Naive thymus-derived CD4-positive, alpha-beta T cell (primary cell): ENCODE measurements at regions of chr19 and their contacts with region 1.

Region 1: DNA sequence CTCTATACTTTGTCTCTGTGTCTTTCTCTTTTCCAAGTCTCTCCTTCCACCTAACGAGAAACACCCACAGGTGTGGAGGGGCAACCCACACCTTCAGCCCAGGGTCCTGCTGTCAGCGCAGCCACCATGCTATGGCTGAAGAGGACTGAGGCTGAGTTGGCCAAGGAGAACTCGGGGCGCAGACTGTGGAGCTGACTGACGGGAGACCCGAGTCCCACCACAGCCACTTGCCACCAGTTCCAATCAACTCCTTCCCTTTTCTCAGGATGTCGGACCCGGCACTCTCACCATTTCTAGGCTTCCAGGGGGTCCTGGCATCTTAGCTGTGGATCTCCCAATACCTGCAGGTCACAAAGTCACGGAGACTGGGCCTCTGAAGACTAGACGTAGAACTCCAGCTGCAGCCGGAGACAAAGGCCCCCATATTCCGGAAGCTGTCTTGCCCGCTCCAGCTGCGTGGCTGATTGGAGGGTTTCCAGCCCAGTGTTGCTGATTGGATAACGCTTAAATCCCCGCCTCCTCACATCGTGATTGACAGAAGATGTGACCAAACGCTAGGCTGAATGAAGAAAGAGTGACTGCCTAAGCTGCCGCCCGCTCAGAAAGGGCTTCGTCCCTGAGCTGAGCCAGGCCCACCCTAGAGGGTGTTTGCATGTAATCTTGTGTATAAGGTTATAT is 63.6 kb downstream of the ZNF429 start:
- DNase-seq: peak; percentile 54 to 94 (median 89)
- ATAC-seq: peak; percentile 99
- H3K4me3 ChIP-seq: peak overlapping the region; percentile 64
- H3K4me3 Mint-ChIP-seq: peak overlapping the region; percentile 85 to 99 (median 94)
- H3K27ac ChIP-seq: peak overlapping the region; percentile 71
- H3K27ac Mint-ChIP-seq: peak overlapping the region; percentile 94 to 99 (median 96)
- H3K4me1 ChIP-seq: no peaks in the 10 kb centered on the region
- H3K4me1 Mint-ChIP-seq: peaks cover 0 to 44% (median 24%) of the 10 kb centered on the region in 7 donors
- H3K27me3 ChIP-seq: no peaks in the 10 kb centered on the region
- H3K27me3 Mint-ChIP-seq: no peaks in the 10 kb centered on the region

Region 2: GRCh38 chr19:21580101-21580500 is 11.1 kb after region 1 on chr19:
- CTCF ChIA-PET with region 1: interaction called, 9 read pairs
- POLR2A ChIA-PET with region 1: interaction called, 144 read pairs
- intact Hi-C with region 1: loop called in 1 of 2 experiments (anchors 1 kb)
- DNase-seq: peak in 5 of 9 donors; percentile 42 to 54 (median 48)
- ATAC-seq: peak; percentile 57
- H3K4me3 ChIP-seq: no peak overlapping the region
- H3K4me3 Mint-ChIP-seq: peak overlapping the region in 7 of 10 donors; percentile 37 to 75 (median 64)
- H3K27ac ChIP-seq: peak overlapping the region; percentile 51
- H3K27ac Mint-ChIP-seq: peak overlapping the region in 7 of 9 donors; percentile 72 to 89 (median 85)
- H3K4me1 ChIP-seq: peaks cover 0 to 20% of the 10 kb centered on the region in 2 donors
- H3K4me1 Mint-ChIP-seq: peaks cover 0 to 60% (median 31%) of the 10 kb centered on the region in 7 donors
- H3K27me3 ChIP-seq: no peaks in the 10 kb centered on the region
- H3K27me3 Mint-ChIP-seq: peaks cover 0 to 12% (median 0%) of the 10 kb centered on the region in 5 donors

Region 3: DNA sequence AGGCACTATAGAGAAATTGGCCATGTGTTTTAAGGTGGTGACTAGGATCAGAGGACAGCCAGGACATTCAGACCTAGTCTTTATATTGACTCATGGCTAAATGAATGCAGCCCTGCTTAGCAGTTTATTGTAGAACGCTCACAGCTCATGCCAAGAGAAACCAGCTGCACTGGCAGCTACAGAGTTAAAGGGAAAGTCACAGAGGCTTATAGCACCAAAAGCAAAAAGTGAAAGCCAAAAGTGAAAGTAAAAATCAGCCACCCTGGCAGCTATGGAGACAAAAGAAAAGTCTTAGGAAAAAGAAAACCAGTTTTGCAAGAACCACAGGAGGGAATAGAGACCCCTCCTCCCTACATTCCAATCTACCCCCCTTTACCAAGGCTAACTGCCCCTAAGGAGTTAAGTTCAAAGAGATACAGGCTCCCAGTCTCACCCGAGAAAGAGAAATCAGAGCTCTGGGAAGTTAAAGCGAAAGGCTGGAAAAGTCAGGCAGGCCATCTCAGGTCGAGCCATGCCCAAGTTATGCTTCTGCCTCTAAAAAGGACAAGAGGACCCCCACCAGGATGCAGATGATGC is 35.5 kb after region 1 on chr19:
- CTCF ChIA-PET with region 1: no interaction called
- POLR2A ChIA-PET with region 1: interaction called, 20 read pairs
- intact Hi-C with region 1: loop called in 1 of 2 experiments (anchors 1 kb)
- DNase-seq: peak in 6 of 9 donors; percentile 24 to 55 (median 49)
- ATAC-seq: peak; percentile 67
- H3K4me3 ChIP-seq: peak overlapping the region; percentile 65
- H3K4me3 Mint-ChIP-seq: peak overlapping the region; percentile 80 to 96 (median 92)
- H3K27ac ChIP-seq: peak overlapping the region; percentile 73
- H3K27ac Mint-ChIP-seq: peak overlapping the region; percentile 84 to 97 (median 96)
- H3K4me1 ChIP-seq: peaks cover 0 to 9% of the 10 kb centered on the region in 2 donors
- H3K4me1 Mint-ChIP-seq: peaks cover 17 to 31% (median 21%) of the 10 kb centered on the region in 7 donors
- H3K27me3 ChIP-seq: no peaks in the 10 kb centered on the region
- H3K27me3 Mint-ChIP-seq: no peaks in the 10 kb centered on the region

Region 4: GRCh38 chr19:21698215-21698614 is 129.3 kb after region 1 on chr19:
- CTCF ChIA-PET with region 1: interaction called, 5 read pairs
- POLR2A ChIA-PET with region 1: no interaction called
- intact Hi-C with region 1: loop called (anchors 5 kb)
- DNase-seq: peak in 5 of 9 donors; percentile 40 to 57 (median 45)
- ATAC-seq: peak; percentile 72
- H3K4me3 ChIP-seq: no peak overlapping the region
- H3K4me3 Mint-ChIP-seq: no peak overlapping the region
- H3K27ac ChIP-seq: no peak overlapping the region
- H3K27ac Mint-ChIP-seq: no peak overlapping the region
- H3K4me1 ChIP-seq: no peaks in the 10 kb centered on the region
- H3K4me1 Mint-ChIP-seq: no peaks in the 10 kb centered on the region
- H3K27me3 ChIP-seq: no peaks in the 10 kb centered on the region
- H3K27me3 Mint-ChIP-seq: peaks cover 0 to 4% (median 0%) of the 10 kb centered on the region in 5 donors

Region 5: GRCh38 chr19:21851596-21852345 is 282.8 kb after region 1 on chr19:
- CTCF ChIA-PET with region 1: no interaction called
- POLR2A ChIA-PET with region 1: interaction called, 3 read pairs
- intact Hi-C with region 1: loop called in 1 of 2 experiments (anchors 1 kb)
- DNase-seq: peak; percentile 71 to 90 (median 88)
- ATAC-seq: peak; percentile 99
- H3K4me3 ChIP-seq: peak overlapping the region; percentile 98
- H3K4me3 Mint-ChIP-seq: peak overlapping the region; percentile 89 to 96 (median 92)
- H3K27ac ChIP-seq: peak overlapping the region; percentile 90
- H3K27ac Mint-ChIP-seq: peak overlapping the region; percentile 68 to 96 (median 92)
- H3K4me1 ChIP-seq: peaks cover 6 to 10% of the 10 kb centered on the region in 2 donors
- H3K4me1 Mint-ChIP-seq: peaks cover 8 to 34% (median 27%) of the 10 kb centered on the region in 7 donors
- H3K27me3 ChIP-seq: no peaks in the 10 kb centered on the region
- H3K27me3 Mint-ChIP-seq: peaks cover 0 to 1% (median 0%) of the 10 kb centered on the region in 5 donors